CD4-positive, alpha-beta memory T cell (primary cell): ENCODE measurements at regions of chr20 and their contacts with region 1.

Region 1: DNA sequence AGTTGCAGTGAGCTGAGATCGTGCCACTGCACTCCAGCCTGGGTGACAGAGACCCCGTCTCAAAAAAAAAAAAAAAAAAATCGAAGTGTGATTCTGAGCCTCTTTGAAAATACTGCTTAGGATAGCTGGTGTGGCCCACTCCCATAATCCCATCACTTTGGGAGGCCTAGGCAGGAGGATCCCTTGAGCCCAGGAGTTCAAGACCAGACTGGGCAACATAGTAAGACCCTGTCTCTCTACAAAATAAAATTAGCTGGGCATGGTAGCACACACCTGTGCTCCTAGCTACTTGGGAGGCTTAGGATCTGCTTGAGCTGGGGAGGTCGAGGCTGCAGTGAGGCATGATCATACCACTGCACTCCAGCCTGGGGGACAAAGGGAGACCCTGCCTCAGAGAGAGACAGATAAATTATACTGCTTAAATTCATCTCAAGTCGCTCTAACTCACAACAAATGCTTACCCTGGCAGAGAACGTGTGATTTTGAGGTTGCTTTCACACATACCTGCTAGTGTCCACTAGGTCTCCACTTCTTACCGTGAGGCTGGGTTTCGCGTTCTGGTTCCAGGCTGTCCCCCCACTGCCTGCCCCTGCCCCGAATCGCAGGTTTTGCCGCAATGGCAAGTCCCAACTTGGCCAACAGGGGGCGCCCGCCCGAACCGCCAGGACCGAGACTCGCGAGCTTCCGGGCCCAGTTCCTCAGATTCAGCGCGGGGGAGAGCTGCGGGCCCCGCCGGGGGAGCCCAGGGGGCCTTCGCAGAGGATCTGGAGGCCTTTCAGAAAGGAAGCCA is 12.3 kb upstream of the TMC2 start:
- DNase-seq: peak; percentile 86 to 90 (median 87)
- H3K4me3 ChIP-seq: peak overlapping the region; percentile 59 to 83
- H3K4me3 Mint-ChIP-seq: peak overlapping the region; percentile 90 to 94 (median 92)
- H3K27ac ChIP-seq: peak overlapping the region; percentile 63
- H3K27ac Mint-ChIP-seq: peak overlapping the region; percentile 29 to 89 (median 77)
- H3K4me1 ChIP-seq: peaks cover 10% of the 10 kb centered on the region
- H3K4me1 Mint-ChIP-seq: peaks cover 10 to 23% (median 15%) of the 10 kb centered on the region in 4 donors
- H3K27me3 ChIP-seq: no peaks in the 10 kb centered on the region
- H3K27me3 Mint-ChIP-seq: peaks cover 0 to 2% of the 10 kb centered on the region in 2 donors

Region 2: DNA sequence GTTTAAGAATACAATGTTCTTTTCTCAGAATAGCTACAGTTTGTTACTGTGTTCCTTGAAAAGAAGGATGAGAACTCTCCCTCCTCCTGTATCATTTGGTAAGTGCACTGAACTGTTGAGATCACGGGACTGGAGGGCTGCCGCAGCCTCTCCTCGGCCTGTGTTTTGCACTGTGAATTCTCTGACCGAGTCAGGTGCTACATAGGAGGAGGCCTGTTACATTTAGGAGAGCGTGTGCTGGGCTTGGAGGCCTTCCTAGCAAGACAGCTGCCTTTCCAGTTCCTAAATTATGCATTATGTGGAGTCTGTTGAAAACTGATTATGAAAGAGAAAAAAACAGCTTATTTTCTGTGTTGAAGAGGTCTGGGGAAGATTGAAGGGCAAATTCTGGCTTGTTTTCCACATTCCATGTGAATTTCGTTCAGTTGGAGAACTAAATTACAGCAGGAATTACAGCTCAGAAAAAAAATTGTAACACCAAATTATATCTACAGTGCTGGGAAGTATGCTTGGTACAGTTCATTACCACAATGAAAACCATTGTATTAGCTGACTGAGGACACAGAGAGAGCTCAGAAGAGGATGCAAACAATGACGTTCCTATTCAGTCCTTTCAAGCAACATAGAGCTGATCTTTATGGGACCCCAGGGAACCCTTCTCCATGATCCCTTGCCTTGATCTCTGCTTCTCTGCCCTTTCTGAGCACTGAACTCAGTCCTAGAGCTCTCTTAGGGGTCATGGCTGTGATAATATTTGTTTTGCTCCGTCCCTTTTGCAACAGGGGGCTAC is 15.0 kb after region 1 on chr20:
- CTCF ChIA-PET with region 1: interaction called, 10 read pairs
- POLR2A ChIA-PET with region 1: no interaction called
- intact Hi-C with region 1: no loop called
- DNase-seq: no peak
- H3K4me3 ChIP-seq: no peak overlapping the region
- H3K4me3 Mint-ChIP-seq: no peak overlapping the region
- H3K27ac ChIP-seq: no peak overlapping the region
- H3K27ac Mint-ChIP-seq: no peak overlapping the region
- H3K4me1 ChIP-seq: no peaks in the 10 kb centered on the region
- H3K4me1 Mint-ChIP-seq: no peaks in the 10 kb centered on the region
- H3K27me3 ChIP-seq: peaks cover 4% of the 10 kb centered on the region
- H3K27me3 Mint-ChIP-seq: peaks cover 21 to 36% of the 10 kb centered on the region in 2 donors

Region 3: GRCh38 chr20:2651772-2652723 is 127.9 kb after region 1 on chr20 and contains the start of gene NOP56:
- CTCF ChIA-PET with region 1: interaction called, 35 read pairs
- POLR2A ChIA-PET with region 1: interaction called, 15 read pairs
- intact Hi-C with region 1: loop called (anchors 1 kb)
- DNase-seq: peak; percentile 89 to 99 (median 95)
- H3K4me3 ChIP-seq: peak within 1 kb of the TSS; percentile 85 to 88
- H3K4me3 Mint-ChIP-seq: peak within 1 kb of the TSS; percentile 90 to 92 (median 91)
- H3K27ac ChIP-seq: peak within 1 kb of the TSS; percentile 80
- H3K27ac Mint-ChIP-seq: peak within 1 kb of the TSS; percentile 89 to 94 (median 92)
- H3K4me1 ChIP-seq: peaks cover 31% of the 10 kb centered on the region
- H3K4me1 Mint-ChIP-seq: peaks cover 21 to 60% (median 29%) of the 10 kb centered on the region in 4 donors
- H3K27me3 ChIP-seq: no peaks in the 10 kb centered on the region
- H3K27me3 Mint-ChIP-seq: no peaks in the 10 kb centered on the region
- total RNA-seq, gene NOP56: 258 to 270 TPM

Region 4: DNA sequence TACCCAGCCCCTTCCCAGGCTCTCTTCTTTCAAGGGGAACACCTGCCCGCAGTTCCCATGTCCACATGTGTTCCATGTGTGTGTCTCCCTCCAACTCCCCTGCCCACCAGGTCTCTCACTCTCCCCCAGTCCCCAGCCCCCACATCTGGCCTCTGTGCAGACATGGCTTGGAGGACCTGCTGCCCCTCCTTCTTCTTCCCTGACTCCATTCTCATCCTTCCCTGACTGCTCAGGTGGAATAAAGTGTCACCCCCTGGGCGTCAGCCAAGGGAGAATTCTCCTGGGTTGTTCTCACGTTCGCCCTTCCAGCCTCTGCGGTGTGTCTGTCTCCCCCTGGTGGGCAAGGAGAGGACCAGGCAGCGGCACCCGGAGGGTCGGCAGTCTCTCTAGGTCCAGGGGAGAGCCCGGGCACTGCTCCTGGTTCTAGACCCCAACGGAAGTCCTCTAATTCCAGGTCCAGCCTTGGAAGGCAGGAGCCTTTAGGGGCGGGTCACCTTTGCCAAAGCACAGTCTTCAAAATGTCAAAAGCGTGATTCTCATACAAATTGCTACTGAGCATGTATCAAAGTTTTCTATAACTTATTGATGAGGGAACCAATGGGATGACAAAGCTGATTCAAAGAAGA is 218.9 kb after region 1 on chr20:
- CTCF ChIA-PET with region 1: interaction called, 3 read pairs
- POLR2A ChIA-PET with region 1: interaction called, 4 read pairs
- intact Hi-C with region 1: loop called (anchors 10 kb)
- DNase-seq: peak; percentile 68 to 80 (median 74)
- H3K4me3 ChIP-seq: no peak overlapping the region
- H3K4me3 Mint-ChIP-seq: peak overlapping the region; percentile 56 to 94 (median 72)
- H3K27ac ChIP-seq: peak overlapping the region; percentile 42
- H3K27ac Mint-ChIP-seq: peak overlapping the region; percentile 84 to 98 (median 93)
- H3K4me1 ChIP-seq: peaks cover 42% of the 10 kb centered on the region
- H3K4me1 Mint-ChIP-seq: peaks cover 37 to 56% (median 44%) of the 10 kb centered on the region in 4 donors
- H3K27me3 ChIP-seq: no peaks in the 10 kb centered on the region
- H3K27me3 Mint-ChIP-seq: no peaks in the 10 kb centered on the region

Region 5: DNA sequence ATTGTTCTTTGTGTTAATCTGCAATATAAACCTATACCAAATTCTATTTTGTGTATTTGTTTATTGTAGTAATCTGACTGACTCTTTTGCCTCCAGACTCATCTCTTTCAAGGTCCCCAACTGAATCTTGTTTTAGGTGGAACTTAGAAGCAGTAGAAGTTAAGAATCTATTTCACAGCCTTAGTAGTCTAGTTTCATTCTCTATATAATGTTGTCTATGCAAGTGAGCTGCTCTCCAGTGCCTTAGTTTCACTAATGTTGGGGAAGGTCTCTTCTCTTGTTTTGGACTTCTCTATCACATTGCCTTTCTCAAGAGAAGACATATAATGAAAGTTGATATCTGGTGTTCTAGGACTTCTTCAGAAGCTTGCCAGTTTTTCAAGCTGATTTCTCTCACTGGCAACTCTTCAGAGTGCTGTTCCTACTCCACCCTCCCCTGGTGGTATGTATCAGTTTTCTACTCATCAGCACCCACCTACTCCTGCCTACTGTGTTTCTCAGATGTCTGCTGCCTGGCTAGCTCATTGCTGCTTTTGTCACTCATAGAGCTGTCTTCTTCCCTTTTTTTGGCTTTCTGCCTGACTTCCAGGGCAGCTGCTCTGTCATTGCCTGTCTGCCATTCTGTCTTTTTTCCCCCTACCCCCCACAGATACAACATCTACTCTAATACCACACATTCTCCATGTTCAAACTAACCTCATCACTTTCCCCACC is 431.3 kb after region 1 on chr20:
- CTCF ChIA-PET with region 1: no interaction called
- POLR2A ChIA-PET with region 1: no interaction called
- intact Hi-C with region 1: no loop called
- DNase-seq: no peak
- H3K4me3 ChIP-seq: no peak overlapping the region
- H3K4me3 Mint-ChIP-seq: no peak overlapping the region
- H3K27ac ChIP-seq: no peak overlapping the region
- H3K27ac Mint-ChIP-seq: no peak overlapping the region
- H3K4me1 ChIP-seq: no peaks in the 10 kb centered on the region
- H3K4me1 Mint-ChIP-seq: peaks cover 0 to 11% (median 2%) of the 10 kb centered on the region in 4 donors
- H3K27me3 ChIP-seq: no peaks in the 10 kb centered on the region
- H3K27me3 Mint-ChIP-seq: no peaks in the 10 kb centered on the region